ENCODE measurements at regions of chr19 and their contacts with region 1.

Region 1: DNA sequence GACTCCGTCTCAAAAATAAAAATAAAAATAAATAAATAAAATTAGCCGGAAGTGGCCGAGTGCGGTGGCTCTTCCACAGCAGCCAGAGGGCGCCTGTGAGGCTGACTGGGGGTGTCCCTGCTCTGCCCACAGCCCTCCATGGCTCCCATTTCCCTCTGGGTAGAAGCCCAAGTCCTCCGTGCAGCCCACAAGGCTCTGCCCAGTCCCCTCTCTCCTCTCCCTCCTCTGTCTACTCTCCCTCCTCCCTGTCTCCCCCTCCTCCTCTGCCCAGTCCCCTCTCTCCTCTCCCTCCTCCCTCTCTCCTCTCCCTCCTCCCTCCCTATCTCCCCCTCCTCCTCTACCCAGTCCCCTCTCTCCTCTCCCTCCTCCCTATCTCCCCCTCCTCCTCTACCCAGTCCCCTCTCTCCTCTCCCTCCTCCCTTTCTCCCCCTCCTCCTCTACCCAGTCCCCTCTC is 20.4 kb downstream of the MISP start:
- DNase-seq: peak; percentile 61
- ATAC-seq: no peak
- H3K4me3 Mint-ChIP-seq: no peak overlapping the region
- H3K27ac Mint-ChIP-seq: no peak overlapping the region
- H3K4me1 Mint-ChIP-seq: peaks cover 3% of the 10 kb centered on the region
- H3K27me3 Mint-ChIP-seq: peaks cover 2% of the 10 kb centered on the region

Region 2: GRCh38 chr19:782185-782877 is 11.0 kb after region 1 on chr19:
- CTCF ChIA-PET with region 1: no interaction called
- DNase-seq: no peak
- ATAC-seq: no peak
- H3K4me3 Mint-ChIP-seq: no peak overlapping the region
- H3K27ac Mint-ChIP-seq: no peak overlapping the region
- H3K4me1 Mint-ChIP-seq: no peaks in the 10 kb centered on the region
- H3K27me3 Mint-ChIP-seq: no peaks in the 10 kb centered on the region

Region 3: DNA sequence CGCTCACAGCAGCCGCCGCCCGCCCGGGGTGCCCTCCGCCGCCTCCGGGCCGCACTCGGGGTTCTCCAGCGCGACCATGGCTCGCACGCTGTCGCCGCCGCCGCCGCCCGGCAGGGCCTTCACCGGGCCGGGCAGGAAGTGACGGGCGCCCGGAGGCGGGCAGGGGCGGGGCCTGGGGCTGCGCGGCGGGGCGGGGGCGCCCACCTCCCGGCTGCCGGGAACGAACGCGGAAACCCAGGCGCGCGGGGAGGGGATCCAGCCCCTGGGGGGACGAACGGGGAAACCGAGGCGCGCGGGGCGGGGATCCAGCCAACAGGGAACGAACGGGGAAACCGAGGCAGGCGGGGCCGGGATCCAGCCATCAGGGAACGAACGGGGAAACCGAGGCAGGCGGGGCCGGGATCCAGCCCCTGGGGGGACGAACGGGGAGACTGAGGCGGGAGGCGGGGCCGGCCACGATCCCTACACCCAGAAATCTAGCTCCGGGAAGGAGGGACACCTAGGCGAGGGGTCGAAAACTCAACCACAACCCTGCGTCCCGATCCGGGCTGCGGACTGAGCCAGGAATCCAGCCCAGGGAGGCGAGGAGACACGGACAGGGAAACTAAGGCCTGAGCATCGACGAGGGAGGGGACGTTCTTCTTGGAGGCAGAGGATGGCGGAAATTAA is 141.9 kb after region 1 on chr19 and contains the start of gene R3HDM4:
- CTCF ChIA-PET with region 1: interaction called, 14 read pairs
- DNase-seq: peak; percentile 86
- ATAC-seq: peak; percentile 73
- H3K4me3 Mint-ChIP-seq: peak within 1 kb of the TSS; percentile 78
- H3K27ac Mint-ChIP-seq: peak within 1 kb of the TSS; percentile 84
- H3K4me1 Mint-ChIP-seq: peaks cover 32% of the 10 kb centered on the region
- H3K27me3 Mint-ChIP-seq: peaks cover 2% of the 10 kb centered on the region
- total RNA-seq, gene R3HDM4: 63.7 to 73.7 TPM

Measured in activated CD8-positive, alpha-beta memory T cell treated with anti-CD3 and anti-CD28 coated beads, Interleukin-2, amount 10 ng/mL, durations not matched to agents 7 days and 5 days (primary cell).